ENCODE measurements at regions of chr9 and their contacts with region 1.

Region 1: DNA sequence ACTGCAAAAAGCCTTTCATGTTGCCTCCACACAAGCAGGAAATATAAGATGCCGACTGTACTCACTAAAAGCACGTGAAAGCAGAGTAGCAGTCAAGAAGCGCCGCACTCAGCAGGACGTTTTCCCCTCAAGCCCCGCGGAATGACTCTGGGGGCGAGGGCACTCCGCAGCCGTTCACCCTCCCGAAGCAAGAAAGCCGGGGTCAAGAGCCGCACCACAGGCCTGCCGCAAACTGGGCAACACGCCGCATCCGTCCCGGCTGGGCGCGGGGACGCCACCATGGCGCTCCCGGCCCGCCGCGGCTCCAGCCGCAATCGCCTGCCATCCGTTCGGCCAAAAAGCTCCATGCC is 364 bp downstream of the RPS6 start:
- DNase-seq: no peak
- ATAC-seq: peak; percentile 51
- H3K4me3 ChIP-seq: peak overlapping the region; percentile 73 to 98 (median 93)
- H3K27ac ChIP-seq: peak overlapping the region; percentile 91
- H3K4me1 ChIP-seq: peaks cover 31% of the 10 kb centered on the region
- H3K27me3 ChIP-seq: no peaks in the 10 kb centered on the region; a peak in 1 of 5 replicates
- CTCF ChIP-seq: no peak
- EP300 ChIP-seq: no peak
- POLR2A ChIP-seq: no peak
- RAD21 ChIP-seq: no peak

Region 2: DNA sequence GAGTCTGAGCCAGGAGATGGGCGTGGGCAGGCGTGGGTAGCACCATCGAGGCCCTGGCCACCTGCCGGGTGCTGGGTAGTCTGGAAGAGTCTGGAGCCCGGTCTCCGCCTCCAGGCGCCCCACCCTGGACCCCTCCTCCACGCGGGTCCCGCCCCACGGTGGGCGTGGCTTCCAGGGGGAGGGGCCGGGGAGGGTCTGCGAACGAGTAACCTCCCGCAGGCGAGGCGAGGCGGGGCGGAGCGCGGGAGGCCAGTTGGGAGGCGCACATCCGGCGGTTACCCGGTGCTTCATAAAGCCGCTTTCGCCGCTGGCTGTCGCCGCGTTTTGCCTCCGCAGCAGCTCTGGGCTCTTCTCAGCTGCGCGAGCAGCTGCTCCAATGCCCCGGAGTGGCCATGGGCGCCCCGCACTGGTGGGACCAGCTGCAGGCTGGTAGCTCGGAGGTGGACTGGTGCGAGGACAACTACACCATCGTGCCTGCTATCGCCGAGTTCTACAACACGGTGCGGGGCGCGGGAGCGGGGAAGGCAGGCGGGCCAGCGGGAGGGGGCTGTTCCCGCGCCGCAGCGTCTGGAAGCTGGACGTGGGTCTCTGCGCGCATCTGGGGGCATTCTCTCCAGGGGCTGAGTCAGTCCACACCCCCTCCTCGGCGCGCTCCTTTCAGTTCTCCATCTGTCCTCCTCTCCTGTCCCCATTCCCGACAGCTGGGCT is 29.2 kb after region 1 on chr9 and contains the start of gene ACER2:
- CTCF ChIA-PET with region 1: no interaction called
- POLR2A ChIA-PET with region 1: interaction called, 9 read pairs
- in situ Hi-C with region 1: no loop called
- intact Hi-C with region 1: loop called (anchors 1 kb)
- DNase-seq: peak; percentile 83
- ATAC-seq: peak; percentile 93
- H3K4me3 ChIP-seq: peak within 1 kb of the TSS; percentile 72 to 94 (median 81)
- H3K27ac ChIP-seq: peak within 1 kb of the TSS; percentile 63
- H3K4me1 ChIP-seq: peaks cover 39% of the 10 kb centered on the region
- H3K27me3 ChIP-seq: no peaks in the 10 kb centered on the region; a peak in 2 of 5 replicates
- CTCF ChIP-seq: peak; percentile 48; the same call in 1 of the 2 replicates
- EP300 ChIP-seq: no peak
- POLR2A ChIP-seq: peak; percentile 83 to 87
- RAD21 ChIP-seq: 0 out of 2 replicates have a peak, but pooled peaks have one; percentile 42
- total RNA-seq, gene ACER2: 2.1 and 3.4 TPM in 2 replicates

Measured in HepG2 (cell line).